Left lung (tissue), 14 donors: ENCODE measurements at regions of chr3 and their contacts with region 1.

Region 1: GRCh38 chr3:152471814-152472671 is 203.3 kb downstream of the MBNL1 start:
- DNase-seq: peak in 3 of 4 donors; percentile 40 to 73 (median 43)
- ATAC-seq: peak; percentile 90
- H3K4me3 ChIP-seq: no peak overlapping the region
- H3K27ac ChIP-seq: no peak overlapping the region
- H3K4me1 ChIP-seq: peaks cover 0 to 6% of the 10 kb centered on the region in 2 donors
- H3K27me3 ChIP-seq: no peaks in the 10 kb centered on the region
- CTCF ChIP-seq: peak; percentile 64

Region 2: GRCh38 chr3:152524198-152525140 is 52.4 kb after region 1 on chr3:
- intact Hi-C with region 1: loop called in 1 of 2 experiments (anchors 10 kb)
- DNase-seq: peak in 2 of 4 donors; percentile 42 to 59
- ATAC-seq: peak; percentile 85
- H3K4me3 ChIP-seq: no peak overlapping the region
- H3K27ac ChIP-seq: no peak overlapping the region
- H3K4me1 ChIP-seq: no peaks in the 10 kb centered on the region
- H3K27me3 ChIP-seq: no peaks in the 10 kb centered on the region
- CTCF ChIP-seq: peak; percentile 71 to 87